AG04450 (cell line): ENCODE measurements at regions of chr6 and their contacts with region 1.

Region 1: DNA sequence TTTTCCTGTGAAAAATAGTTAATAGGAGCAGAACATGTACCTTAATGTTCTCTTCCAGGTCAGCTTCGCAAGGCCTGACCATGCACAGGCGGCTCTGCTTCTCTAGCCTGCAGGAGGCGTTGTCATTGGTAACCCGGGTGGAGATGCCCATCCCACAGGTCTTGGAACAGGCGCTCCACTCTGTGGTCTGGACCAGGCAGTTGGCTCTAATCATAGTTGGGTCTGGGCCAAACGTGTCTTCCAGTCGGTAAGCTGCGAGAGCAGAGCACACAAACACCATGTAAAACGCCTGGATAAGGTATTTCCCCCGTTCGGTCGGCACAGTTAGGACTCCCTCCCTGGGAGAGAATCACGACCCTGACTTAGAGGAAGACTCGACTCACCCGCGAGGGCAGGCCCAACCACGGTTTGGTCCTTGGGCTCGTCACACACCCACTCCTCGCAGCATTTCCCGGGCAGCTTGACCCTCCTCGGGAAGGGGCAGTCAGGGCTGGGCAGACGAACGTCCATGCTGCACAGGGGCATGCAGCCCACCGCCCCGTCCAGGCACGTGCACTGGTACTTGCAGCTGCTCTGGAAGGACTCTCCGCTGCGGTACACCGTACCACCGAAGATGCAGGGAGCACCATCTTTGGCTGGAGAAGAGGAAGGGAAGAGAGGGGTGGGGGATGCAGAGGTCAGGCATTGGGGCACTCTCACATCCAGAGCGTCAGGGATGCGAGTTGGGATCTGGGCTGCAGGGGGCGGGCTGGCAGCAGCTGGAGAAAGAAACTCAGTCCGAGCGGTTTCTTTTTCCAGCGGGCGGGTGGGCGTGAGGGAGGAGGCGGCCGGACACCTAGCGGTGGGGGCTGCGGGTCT is 1.0 kb downstream of the CCN2 start:
- DNase-seq: peak; percentile 87
- H3K4me3 ChIP-seq: peak overlapping the region; percentile 98
- H3K27ac ChIP-seq: peak overlapping the region; percentile 97
- H3K27me3 ChIP-seq: no peaks in the 10 kb centered on the region
- CTCF ChIP-seq: peak; percentile 46

Region 2: DNA sequence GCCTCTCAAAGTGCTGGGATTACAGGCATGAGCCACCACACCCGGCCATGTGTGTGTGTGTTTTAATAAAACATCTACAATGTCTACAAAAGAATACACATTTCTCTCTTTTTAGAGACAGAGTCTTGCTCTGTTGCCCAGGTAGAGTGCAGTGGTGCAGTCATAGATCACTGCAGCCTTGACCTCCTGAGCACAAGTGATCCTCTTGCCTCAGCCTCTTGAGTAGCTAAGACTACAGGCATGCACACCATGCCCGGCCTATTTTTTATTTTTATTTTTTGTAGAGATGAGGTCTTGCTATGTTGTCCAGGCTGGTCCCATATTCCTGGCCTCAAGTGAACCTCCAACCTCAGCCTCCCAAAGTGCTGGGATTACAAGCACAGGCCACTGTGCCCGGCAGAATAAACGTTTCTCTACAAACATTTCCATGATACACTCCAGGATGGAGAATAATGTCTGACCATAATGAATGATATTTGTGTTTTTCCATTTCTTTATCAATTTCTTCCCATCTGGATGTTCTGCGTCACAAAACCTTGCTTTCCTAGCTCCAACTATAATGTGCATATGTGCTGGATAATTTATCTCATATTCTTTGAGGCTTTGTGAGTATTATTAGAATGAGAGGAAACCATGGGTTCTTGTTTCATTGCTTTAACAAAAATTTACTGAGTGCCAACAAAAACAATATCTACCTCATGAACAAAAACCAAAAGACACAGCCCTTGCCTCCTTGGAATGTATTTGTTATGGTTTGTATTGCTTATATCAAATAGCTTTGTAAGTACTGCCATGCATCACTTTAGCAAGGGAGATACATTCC is 29.6 kb after region 1 on chr6:
- CTCF ChIA-PET with region 1: no interaction called
- POLR2A ChIA-PET with region 1: interaction called, 39 read pairs
- DNase-seq: peak; percentile 84
- H3K4me3 ChIP-seq: no peak overlapping the region
- H3K27ac ChIP-seq: peak overlapping the region; percentile 80
- H3K27me3 ChIP-seq: no peaks in the 10 kb centered on the region
- CTCF ChIP-seq: no peak

Region 3: GRCh38 chr6:132020138-132020581 is 70.0 kb after region 1 on chr6:
- CTCF ChIA-PET with region 1: no interaction called
- POLR2A ChIA-PET with region 1: no interaction called
- DNase-seq: no peak
- H3K4me3 ChIP-seq: no peak overlapping the region
- H3K27ac ChIP-seq: no peak overlapping the region
- H3K27me3 ChIP-seq: no peaks in the 10 kb centered on the region
- CTCF ChIP-seq: no peak

Region 4: GRCh38 chr6:132084833-132085509 is 134.8 kb after region 1 on chr6:
- CTCF ChIA-PET with region 1: interaction called, 4 read pairs
- POLR2A ChIA-PET with region 1: interaction called, 79 read pairs
- DNase-seq: peak; percentile 95
- H3K4me3 ChIP-seq: no peak overlapping the region
- H3K27ac ChIP-seq: peak overlapping the region; percentile 99
- H3K27me3 ChIP-seq: no peaks in the 10 kb centered on the region
- CTCF ChIP-seq: no peak

Region 5: GRCh38 chr6:132131758-132132157 is 181.6 kb after region 1 on chr6:
- CTCF ChIA-PET with region 1: interaction called, 3 read pairs
- POLR2A ChIA-PET with region 1: interaction called, 56 read pairs
- DNase-seq: peak; percentile 99
- H3K4me3 ChIP-seq: no peak overlapping the region
- H3K27ac ChIP-seq: peak overlapping the region; percentile 99
- H3K27me3 ChIP-seq: no peaks in the 10 kb centered on the region
- CTCF ChIP-seq: no peak

Region 6: DNA sequence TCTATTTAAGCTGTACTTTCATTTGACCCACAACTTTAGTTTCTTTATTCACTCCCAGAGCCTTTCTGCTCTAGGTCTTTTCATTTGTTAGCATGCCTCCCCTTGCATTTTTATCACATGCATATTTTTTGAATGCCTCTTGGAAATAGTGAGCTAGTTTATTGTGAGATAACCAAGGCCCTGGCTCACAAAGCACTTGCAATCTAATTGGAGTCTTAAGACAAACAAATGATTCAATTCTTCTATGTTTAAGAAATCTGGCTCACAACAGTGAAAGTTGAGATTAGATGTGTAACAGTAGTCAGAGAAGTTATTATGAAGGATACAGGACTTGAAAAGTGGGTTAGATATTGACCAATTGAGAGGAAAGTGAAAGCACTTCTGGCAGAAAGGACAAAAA is 277.8 kb after region 1 on chr6:
- CTCF ChIA-PET with region 1: no interaction called
- POLR2A ChIA-PET with region 1: interaction called, 16 read pairs
- DNase-seq: peak; percentile 81
- H3K4me3 ChIP-seq: no peak overlapping the region
- H3K27ac ChIP-seq: no peak overlapping the region
- H3K27me3 ChIP-seq: no peaks in the 10 kb centered on the region
- CTCF ChIP-seq: no peak